ENCODE measurements at regions of chr4 and their contacts with region 1.

Region 1: DNA sequence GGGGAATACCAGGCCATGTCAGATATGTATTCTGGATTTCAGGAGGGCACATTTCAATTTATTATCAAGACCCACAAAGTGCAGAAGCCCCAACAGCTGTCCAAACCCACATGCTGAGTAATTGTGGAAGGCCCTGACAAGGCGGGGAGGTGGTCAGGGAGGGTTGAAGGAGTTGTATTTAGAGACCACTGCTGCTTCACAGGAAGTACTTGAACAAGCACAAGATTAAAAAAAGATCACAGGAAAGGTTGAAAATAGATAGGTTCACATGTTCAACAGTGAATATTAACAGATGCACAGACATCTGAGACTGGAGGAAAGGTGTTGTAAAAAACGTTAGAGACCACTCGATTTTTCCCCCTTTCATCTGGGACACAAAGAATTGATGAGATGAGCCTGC is 17.9 kb downstream of the ATP8A1 start:
- DNase-seq: no peak
- ATAC-seq: no peak
- H3K4me3 ChIP-seq: peak overlapping the region in 4 of 5 experiments; percentile 11 to 48 (median 18)
- H3K4me3 Mint-ChIP-seq: peak overlapping the region; percentile 67
- H3K27ac ChIP-seq: peak overlapping the region; percentile 56 to 85
- H3K27ac Mint-ChIP-seq: peak overlapping the region; percentile 84
- H3K4me1 ChIP-seq: peaks cover 85 to 90% of the 10 kb centered on the region in 2 donors
- H3K4me1 Mint-ChIP-seq: peaks cover 93% of the 10 kb centered on the region
- H3K27me3 ChIP-seq: no peaks in the 10 kb centered on the region
- H3K27me3 Mint-ChIP-seq: no peaks in the 10 kb centered on the region
- CTCF ChIP-seq: no peak

Region 2: DNA sequence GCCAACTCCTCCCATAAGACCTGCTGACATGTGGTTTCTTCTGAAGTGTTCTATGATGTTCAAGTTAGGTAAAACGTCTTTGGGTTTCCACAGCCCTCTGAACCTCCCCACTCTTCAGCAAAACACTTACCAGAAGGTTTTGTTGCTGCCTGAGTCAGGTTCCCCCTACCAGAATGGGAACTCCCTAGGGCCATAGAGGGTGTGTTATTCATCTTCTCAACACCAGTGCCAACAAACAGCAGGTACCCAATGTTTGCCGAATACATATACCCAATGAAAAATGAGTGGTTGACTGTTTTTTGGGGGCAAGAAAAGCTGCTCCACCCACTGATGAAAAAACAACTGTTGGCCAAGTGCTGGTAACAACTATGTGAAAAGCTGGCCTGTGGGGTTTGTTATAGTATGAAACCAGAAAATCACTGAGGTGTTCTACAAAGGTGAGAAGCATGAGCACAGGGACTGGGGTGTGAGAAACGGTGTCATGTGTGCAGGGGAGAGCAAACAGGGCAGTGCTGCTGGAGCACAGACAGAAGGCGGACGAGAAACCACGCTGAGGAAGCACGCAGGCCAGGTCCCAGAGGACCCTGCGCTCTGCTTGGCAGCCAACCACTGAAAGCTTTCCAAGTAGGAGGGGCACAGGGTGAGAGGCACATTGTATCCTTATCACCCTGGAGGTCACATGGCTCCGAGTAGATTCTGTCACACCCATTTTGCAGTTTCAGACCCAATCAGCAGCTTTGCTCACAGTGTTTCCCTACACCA is 10.9 kb before region 1 on chr4:
- CTCF ChIA-PET with region 1: interaction called, 6 read pairs
- POLR2A ChIA-PET with region 1: interaction called, 3 read pairs
- intact Hi-C with region 1: loop called (anchors 2 kb)
- DNase-seq: peak; percentile 88
- ATAC-seq: peak; percentile 87
- H3K4me3 ChIP-seq: peak overlapping the region in 3 of 5 experiments; percentile 5 to 23 (median 15)
- H3K4me3 Mint-ChIP-seq: peak overlapping the region; percentile 84
- H3K27ac ChIP-seq: peak overlapping the region; percentile 78 to 79
- H3K27ac Mint-ChIP-seq: peak overlapping the region; percentile 97
- H3K4me1 ChIP-seq: peaks cover 69 to 81% of the 10 kb centered on the region in 2 donors
- H3K4me1 Mint-ChIP-seq: peaks cover 78% of the 10 kb centered on the region
- H3K27me3 ChIP-seq: no peaks in the 10 kb centered on the region
- H3K27me3 Mint-ChIP-seq: no peaks in the 10 kb centered on the region
- CTCF ChIP-seq: no peak

Measured in B cell (primary cell).